ENCODE measurements at regions of chr7 and their contacts with region 1.

Region 1: DNA sequence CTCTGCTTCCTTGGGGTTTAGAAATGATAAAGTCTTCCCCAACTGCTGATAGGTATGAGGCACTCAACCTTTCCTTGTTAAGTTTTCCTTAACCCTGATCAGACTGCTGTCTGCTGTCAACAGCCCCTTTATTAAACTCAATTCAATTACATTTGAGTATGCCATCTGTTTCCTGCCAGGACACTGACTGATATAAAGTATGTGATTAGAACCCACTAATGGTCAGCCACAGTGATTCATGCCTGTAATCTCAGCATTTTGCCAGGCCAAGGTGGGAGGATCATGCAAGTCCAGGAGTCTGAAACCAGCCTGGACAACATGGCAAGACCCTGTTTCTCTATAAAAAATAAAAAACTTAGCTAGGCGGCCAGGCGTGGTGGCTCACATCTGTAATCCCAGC is 18.1 kb downstream of the BAZ1B start:
- DNase-seq: peak; percentile 55
- H3K4me3 ChIP-seq: no peak overlapping the region
- H3K27ac ChIP-seq: 0 out of 4 replicates have a peak overlapping the region, but pooled peaks of 1 of the 2 experiments have one; percentile 2
- H3K4me1 ChIP-seq: no peaks in the 10 kb centered on the region
- H3K27me3 ChIP-seq: no peaks in the 10 kb centered on the region
- CTCF ChIP-seq: no peak
- EP300 ChIP-seq: peak in 1 of 2 experiments; percentile 68; a peak in 2 of 4 replicates
- RAD21 ChIP-seq: no peak

Region 2: GRCh38 chr7:73522105-73522872 is 18.3 kb after region 1 on chr7 and contains the start of gene BAZ1B:
- CTCF ChIA-PET with region 1: interaction called, 11 read pairs
- POLR2A ChIA-PET with region 1: interaction called, 4 read pairs
- DNase-seq: peak; percentile 100
- H3K4me3 ChIP-seq: peak within 1 kb of the TSS; percentile 69 to 83
- H3K27ac ChIP-seq: peak within 1 kb of the TSS; percentile 77 to 92
- H3K4me1 ChIP-seq: peaks cover 16 to 23% of the 10 kb centered on the region in 2 experiments
- H3K27me3 ChIP-seq: no peaks in the 10 kb centered on the region
- CTCF ChIP-seq: 0 out of 2 replicates have a peak, but pooled peaks have one; percentile 9
- EP300 ChIP-seq: peak; percentile 4 to 52; a peak in 1 of 4 replicates
- RAD21 ChIP-seq: no peak
- polyA plus RNA-seq, gene BAZ1B: 19.7 and 20.9 TPM in 2 replicates